ENCODE measurements at regions of chr2 and their contacts with region 1.

Region 1: DNA sequence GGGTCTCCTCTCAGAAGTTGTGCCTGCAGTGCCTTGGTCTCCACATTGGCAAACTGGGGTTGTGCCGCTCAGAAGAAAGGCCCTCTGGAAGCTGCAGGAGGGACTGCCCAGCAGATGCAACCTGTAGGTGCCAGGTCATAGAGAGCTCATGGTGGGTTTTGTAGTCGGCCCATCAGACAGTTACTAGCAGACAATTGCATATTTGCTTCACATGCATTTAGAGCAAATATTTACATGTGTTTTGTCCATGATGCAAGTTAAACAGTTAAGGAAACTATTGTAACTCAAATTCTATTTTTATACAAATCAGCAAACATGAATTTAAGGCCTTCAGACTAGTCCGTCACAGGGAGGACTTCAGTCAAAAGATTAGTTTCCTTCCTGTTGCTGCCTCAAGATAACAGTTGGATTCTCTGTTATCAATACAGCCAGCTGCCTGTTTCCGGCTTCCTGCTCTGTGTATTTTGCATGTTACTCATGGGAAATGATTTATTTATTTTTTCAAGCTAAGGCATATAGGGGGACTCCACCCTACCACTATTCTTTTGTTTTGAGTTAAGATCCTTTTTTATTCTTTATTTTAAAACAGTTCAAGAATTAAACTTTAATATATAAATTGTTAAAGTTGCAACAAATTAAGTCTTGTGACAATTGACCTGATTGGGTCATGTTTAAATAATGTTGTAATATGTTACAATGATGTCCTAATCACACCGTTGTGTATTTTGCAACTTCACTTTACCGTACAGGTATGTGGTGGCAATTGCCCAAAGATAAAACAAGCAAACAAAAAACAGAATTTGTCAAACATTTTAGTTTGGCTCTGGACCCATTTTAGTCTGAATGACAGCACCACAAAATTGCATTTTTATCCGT is 133.5 kb downstream of the SPTBN1 start:
- DNase-seq: peak; percentile 65
- H3K4me3 Mint-ChIP-seq: peak overlapping the region; percentile 0
- H3K27ac Mint-ChIP-seq: peak overlapping the region; percentile 1
- H3K4me1 Mint-ChIP-seq: peaks cover 55% of the 10 kb centered on the region
- H3K27me3 Mint-ChIP-seq: no peaks in the 10 kb centered on the region
- CTCF ChIP-seq: no peak

Region 2: DNA sequence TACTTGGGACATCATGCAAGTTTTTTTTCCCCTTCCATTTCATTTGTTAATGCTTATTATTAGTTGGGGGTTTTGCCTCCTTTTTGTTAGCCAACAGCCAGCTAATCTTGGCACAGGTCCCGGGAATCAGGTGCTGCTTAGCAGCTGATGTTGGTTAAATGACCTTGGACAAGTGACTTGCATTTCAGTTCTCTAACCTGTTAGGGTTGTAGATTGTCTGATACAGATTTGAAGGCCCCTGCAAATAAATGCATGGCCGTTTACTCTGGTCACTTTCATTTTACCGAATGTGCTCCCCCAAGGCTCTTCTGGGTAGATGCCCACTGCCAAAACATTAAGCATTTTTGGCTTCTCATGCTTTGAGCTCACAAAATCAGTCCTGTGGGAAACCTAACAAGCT is 12.5 kb before region 1 on chr2:
- CTCF ChIA-PET with region 1: interaction called, 7 read pairs
- POLR2A ChIA-PET with region 1: interaction called, 33 read pairs
- intact Hi-C with region 1: no loop called
- DNase-seq: peak; percentile 66
- H3K4me3 Mint-ChIP-seq: peak overlapping the region; percentile 57
- H3K27ac Mint-ChIP-seq: peak overlapping the region; percentile 93
- H3K4me1 Mint-ChIP-seq: peaks cover 68% of the 10 kb centered on the region
- H3K27me3 Mint-ChIP-seq: no peaks in the 10 kb centered on the region
- CTCF ChIP-seq: no peak